ENCODE measurements at regions of chr1 and their contacts with region 1.

Region 1: DNA sequence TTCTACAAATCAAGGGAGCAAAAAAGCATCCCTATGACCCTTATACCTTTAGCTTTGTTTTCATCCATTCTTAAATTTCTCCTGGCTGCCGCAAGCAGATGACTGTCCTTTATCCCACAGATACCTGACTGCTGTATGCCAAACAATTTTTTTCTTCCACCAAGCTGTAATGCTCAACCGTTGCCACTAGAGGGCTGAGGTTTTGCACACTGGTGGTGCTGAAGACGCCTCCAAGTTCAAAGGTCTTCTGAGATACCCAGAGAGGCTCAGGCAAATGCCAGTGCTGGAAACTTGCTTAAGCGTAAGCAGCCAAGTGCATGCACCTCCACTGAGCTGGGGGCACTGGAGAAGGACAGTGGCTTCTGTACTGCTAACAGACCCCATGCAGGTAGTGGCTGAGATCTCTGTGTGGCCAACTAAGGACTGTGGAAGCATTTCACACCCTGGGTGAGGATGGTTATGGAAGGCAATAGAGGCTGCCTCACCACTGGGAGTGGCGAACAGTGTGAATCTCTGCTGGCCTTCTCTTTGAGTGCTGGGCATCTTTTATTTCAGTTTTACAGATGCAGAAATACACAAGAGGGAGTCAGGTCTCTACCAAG is 28.5 kb downstream of the CNIH3 start:
- DNase-seq: peak; percentile 57
- ATAC-seq: peak; percentile 65
- H3K4me3 ChIP-seq: no peak overlapping the region
- H3K4me3 Mint-ChIP-seq: no peak overlapping the region
- H3K27ac ChIP-seq: no peak overlapping the region
- H3K27ac Mint-ChIP-seq: no peak overlapping the region
- H3K4me1 ChIP-seq: no peaks in the 10 kb centered on the region
- H3K4me1 Mint-ChIP-seq: no peaks in the 10 kb centered on the region
- H3K27me3 ChIP-seq: peaks cover 0 to 5% (median 2%) of the 10 kb centered on the region in 4 experiments
- H3K27me3 Mint-ChIP-seq: peaks cover 29% of the 10 kb centered on the region
- CTCF ChIP-seq: peak; percentile 95

Region 2: DNA sequence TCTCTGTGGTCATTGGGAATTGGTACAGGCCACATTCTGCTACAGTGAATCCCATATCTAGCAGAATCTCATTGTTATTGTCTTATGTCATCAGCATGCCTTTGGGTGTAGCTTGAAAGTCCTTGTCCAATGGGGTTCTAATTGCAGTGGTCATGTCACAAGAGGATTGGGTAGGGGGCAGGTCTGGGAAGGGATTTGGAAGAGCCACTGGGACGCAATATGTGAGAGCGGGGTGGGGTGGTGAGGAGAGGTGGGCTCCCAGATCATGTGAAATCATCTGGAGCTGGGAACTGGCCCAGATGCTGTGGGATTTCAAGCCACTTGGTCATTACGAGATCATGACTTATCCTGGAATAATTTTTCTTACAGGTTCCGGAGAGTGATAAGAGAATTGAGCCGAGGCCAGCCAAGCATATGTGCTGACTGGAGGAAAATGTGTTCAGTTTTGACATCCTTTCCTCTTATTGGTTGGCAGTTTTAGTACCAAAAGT is 12.2 kb before region 1 on chr1:
- CTCF ChIA-PET with region 1: interaction called, 15 read pairs
- POLR2A ChIA-PET with region 1: no interaction called
- intact Hi-C with region 1: no loop called
- DNase-seq: no peak
- ATAC-seq: no peak
- H3K4me3 ChIP-seq: no peak overlapping the region
- H3K4me3 Mint-ChIP-seq: no peak overlapping the region
- H3K27ac ChIP-seq: no peak overlapping the region
- H3K27ac Mint-ChIP-seq: no peak overlapping the region
- H3K4me1 ChIP-seq: no peaks in the 10 kb centered on the region
- H3K4me1 Mint-ChIP-seq: no peaks in the 10 kb centered on the region
- H3K27me3 ChIP-seq: peaks cover 0 to 2% (median 0%) of the 10 kb centered on the region in 4 experiments
- H3K27me3 Mint-ChIP-seq: peaks cover 11% of the 10 kb centered on the region
- CTCF ChIP-seq: no peak

Region 3: GRCh38 chr1:224922404-224923164 is 277.9 kb after region 1 on chr1:
- CTCF ChIA-PET with region 1: no interaction called
- POLR2A ChIA-PET with region 1: no interaction called
- intact Hi-C with region 1: loop called (anchors 5 kb)
- DNase-seq: peak; percentile 6
- ATAC-seq: no peak
- H3K4me3 ChIP-seq: no peak overlapping the region
- H3K4me3 Mint-ChIP-seq: no peak overlapping the region
- H3K27ac ChIP-seq: no peak overlapping the region
- H3K27ac Mint-ChIP-seq: no peak overlapping the region
- H3K4me1 ChIP-seq: no peaks in the 10 kb centered on the region
- H3K4me1 Mint-ChIP-seq: no peaks in the 10 kb centered on the region
- H3K27me3 ChIP-seq: no peaks in the 10 kb centered on the region
- H3K27me3 Mint-ChIP-seq: peaks cover 20% of the 10 kb centered on the region
- CTCF ChIP-seq: peak; percentile 45